Endothelial cell of umbilical vein (primary cell): ENCODE measurements at regions of chrX and their contacts with region 1.

Region 1: DNA sequence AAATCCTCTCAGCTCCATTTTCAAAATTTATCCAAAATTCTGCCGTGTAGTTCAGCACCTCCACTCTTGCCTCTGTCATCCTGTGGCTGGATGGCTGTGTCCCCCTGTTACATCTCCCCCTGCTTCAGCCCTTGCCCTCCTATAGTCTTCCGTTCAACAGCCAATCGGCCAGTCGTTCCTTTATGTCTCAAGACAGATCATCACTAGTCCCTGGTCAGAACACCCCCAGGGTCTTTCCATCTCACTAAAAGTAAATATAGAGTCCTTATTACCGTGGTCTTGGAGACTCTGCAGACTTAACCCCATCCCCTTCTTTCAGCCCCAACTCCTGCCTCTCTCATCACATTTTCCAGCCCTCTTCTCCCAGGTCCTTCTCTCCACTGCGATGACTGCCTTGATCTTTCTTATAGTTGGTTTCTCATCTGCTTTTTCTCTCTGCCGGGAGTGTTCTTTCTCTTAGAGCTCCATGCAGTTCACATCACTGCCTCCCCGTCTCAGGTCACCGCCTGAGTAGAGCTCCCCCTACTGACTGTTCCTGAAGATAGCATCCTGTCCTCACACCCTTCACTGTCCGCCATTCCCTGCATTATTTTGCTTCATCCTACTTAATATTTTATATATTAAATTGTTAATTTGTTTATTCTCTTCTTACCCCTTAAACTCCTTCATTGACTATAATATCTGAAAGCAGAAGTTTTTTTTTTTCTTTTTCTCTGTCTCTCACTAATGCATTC is 736.9 kb upstream of the MAGEB2 start:
- DNase-seq: peak; percentile 24
- H3K4me3 ChIP-seq: no peak overlapping the region
- H3K27ac ChIP-seq: no peak overlapping the region
- H3K4me1 ChIP-seq: no peaks in the 10 kb centered on the region
- H3K27me3 ChIP-seq: no peaks in the 10 kb centered on the region
- CTCF ChIP-seq: peak; percentile 35 to 56
- POLR2A ChIP-seq: no peak

Region 2: GRCh38 chrX:29231800-29232199 is 246.7 kb before region 1 on chrX:
- CTCF ChIA-PET with region 1: interaction called, 4 read pairs
- POLR2A ChIA-PET with region 1: no interaction called
- dilution Hi-C with region 1: no loop called
- intact Hi-C with region 1: loop called (anchors 10 kb)
- DNase-seq: peak; percentile 9
- H3K4me3 ChIP-seq: no peak overlapping the region
- H3K27ac ChIP-seq: no peak overlapping the region
- H3K4me1 ChIP-seq: no peaks in the 10 kb centered on the region
- H3K27me3 ChIP-seq: no peaks in the 10 kb centered on the region
- CTCF ChIP-seq: peak in 1 of 2 donors; percentile 4
- POLR2A ChIP-seq: no peak

Region 3: GRCh38 chrX:29488919-29489318 is 10.4 kb after region 1 on chrX:
- CTCF ChIA-PET with region 1: interaction called, 13 read pairs
- POLR2A ChIA-PET with region 1: no interaction called
- dilution Hi-C with region 1: no loop called
- intact Hi-C with region 1: no loop called
- DNase-seq: no peak
- H3K4me3 ChIP-seq: no peak overlapping the region
- H3K27ac ChIP-seq: no peak overlapping the region
- H3K4me1 ChIP-seq: peaks cover 3% of the 10 kb centered on the region
- H3K27me3 ChIP-seq: no peaks in the 10 kb centered on the region
- CTCF ChIP-seq: no peak
- POLR2A ChIP-seq: no peak